Panc1 (cell line): ENCODE measurements at regions of chr15 and their contacts with region 1.

Region 1: DNA sequence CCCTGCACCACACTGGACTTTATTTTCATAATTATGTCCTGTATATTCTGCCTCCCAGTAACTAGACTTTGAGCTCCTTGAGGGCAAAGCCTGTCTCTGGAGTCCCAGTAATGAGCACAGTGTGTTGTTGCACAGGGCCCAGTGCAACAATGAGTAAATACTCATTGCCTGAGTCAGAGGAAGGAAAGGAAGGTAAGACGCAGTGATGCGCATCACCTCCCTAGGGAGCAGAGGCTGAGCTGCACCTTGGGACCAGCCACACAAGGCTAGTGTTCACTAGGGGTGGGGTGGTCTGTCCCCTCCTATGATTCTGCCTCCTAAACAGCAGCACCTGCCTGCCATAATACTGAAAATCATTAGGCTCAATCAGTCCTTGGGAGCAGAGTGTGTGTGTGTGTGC is 86.6 kb upstream of the ADAMTSL3 start:
- DNase-seq: no peak
- ATAC-seq: no peak
- H3K4me3 ChIP-seq: no peak overlapping the region
- H3K27ac ChIP-seq: no peak overlapping the region
- H3K4me1 ChIP-seq: no peaks in the 10 kb centered on the region
- H3K27me3 ChIP-seq: no peaks in the 10 kb centered on the region
- CTCF ChIP-seq: no peak

Region 2: DNA sequence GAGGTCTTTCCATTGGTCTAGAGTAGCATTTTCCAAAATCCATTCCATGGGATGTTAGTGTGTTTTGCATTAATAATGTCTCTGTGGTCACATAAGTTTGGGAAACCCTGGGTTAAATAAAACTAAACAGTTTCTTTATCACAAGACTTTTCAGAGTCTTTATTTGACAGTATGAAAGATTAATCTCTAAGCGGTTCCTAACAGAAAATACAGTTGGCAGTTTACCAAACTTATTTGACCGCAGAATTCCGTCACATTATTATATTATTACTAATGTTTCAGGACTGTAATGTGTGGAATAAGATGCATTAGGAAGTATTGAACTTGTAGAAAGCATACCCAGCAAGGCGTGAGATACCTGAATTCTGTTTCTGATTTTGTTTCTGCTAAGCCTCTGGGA is 15.1 kb after region 1 on chr15:
- CTCF ChIA-PET with region 1: no interaction called
- POLR2A ChIA-PET with region 1: no interaction called
- in situ Hi-C with region 1: no loop called
- intact Hi-C with region 1: no loop called
- DNase-seq: no peak
- ATAC-seq: no peak
- H3K4me3 ChIP-seq: no peak overlapping the region
- H3K27ac ChIP-seq: no peak overlapping the region
- H3K4me1 ChIP-seq: no peaks in the 10 kb centered on the region
- H3K27me3 ChIP-seq: no peaks in the 10 kb centered on the region
- CTCF ChIP-seq: no peak

Region 3: GRCh38 chr15:83837945-83838571 is 270.7 kb after region 1 on chr15:
- CTCF ChIA-PET with region 1: no interaction called
- POLR2A ChIA-PET with region 1: no interaction called
- in situ Hi-C with region 1: no loop called
- intact Hi-C with region 1: loop called (anchors 5 kb)
- DNase-seq: no peak
- ATAC-seq: no peak
- H3K4me3 ChIP-seq: no peak overlapping the region
- H3K27ac ChIP-seq: no peak overlapping the region
- H3K4me1 ChIP-seq: no peaks in the 10 kb centered on the region
- H3K27me3 ChIP-seq: no peaks in the 10 kb centered on the region
- CTCF ChIP-seq: peak; percentile 63

Region 4: GRCh38 chr15:83880529-83880928 is 313.2 kb after region 1 on chr15:
- CTCF ChIA-PET with region 1: no interaction called
- POLR2A ChIA-PET with region 1: no interaction called
- in situ Hi-C with region 1: no loop called
- intact Hi-C with region 1: no loop called
- DNase-seq: no peak
- ATAC-seq: no peak
- H3K4me3 ChIP-seq: no peak overlapping the region
- H3K27ac ChIP-seq: no peak overlapping the region
- H3K4me1 ChIP-seq: no peaks in the 10 kb centered on the region
- H3K27me3 ChIP-seq: no peaks in the 10 kb centered on the region
- CTCF ChIP-seq: no peak

Region 5: GRCh38 chr15:84035399-84035766 is 468.1 kb after region 1 on chr15:
- CTCF ChIA-PET with region 1: interaction called, 3 read pairs
- POLR2A ChIA-PET with region 1: no interaction called
- in situ Hi-C with region 1: no loop called
- intact Hi-C with region 1: loop called (anchors 5 kb)
- DNase-seq: no peak
- ATAC-seq: peak; percentile 69; the same call in 1 of the 2 replicates
- H3K4me3 ChIP-seq: no peak overlapping the region
- H3K27ac ChIP-seq: no peak overlapping the region
- H3K4me1 ChIP-seq: no peaks in the 10 kb centered on the region
- H3K27me3 ChIP-seq: no peaks in the 10 kb centered on the region
- CTCF ChIP-seq: peak; percentile 36; the same call in 1 of the 2 replicates